ENCODE measurements at regions of chr11 and their contacts with region 1.

Region 1: GRCh38 chr11:250740-251299 is 14.0 kb downstream of the PSMD13 start:
- DNase-seq: peak; percentile 83
- ATAC-seq: peak; percentile 98
- H3K4me3 Mint-ChIP-seq: peak overlapping the region; percentile 63
- H3K27ac Mint-ChIP-seq: peak overlapping the region; percentile 82
- H3K4me1 Mint-ChIP-seq: peaks cover 14% of the 10 kb centered on the region
- H3K27me3 Mint-ChIP-seq: no peaks in the 10 kb centered on the region

Region 2: DNA sequence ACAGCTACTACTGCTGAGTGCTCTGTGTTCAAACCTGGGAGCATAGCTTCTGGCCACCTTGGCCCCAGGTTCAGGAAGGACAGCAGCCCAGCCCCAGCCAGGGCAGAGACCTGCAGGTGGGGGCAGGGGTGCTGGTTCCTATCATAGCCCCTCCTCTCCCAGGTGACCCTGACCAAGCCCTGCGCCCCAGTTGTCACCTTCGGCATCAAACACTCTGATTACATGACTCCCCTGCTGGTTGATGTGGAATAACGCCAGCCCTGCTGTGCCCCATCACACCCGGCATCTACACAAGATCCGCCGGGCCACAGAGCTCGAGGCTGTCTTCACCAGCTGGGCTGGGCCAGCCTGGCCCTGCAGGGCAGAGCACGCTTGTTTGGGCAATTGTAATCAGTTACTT is 51.0 kb before region 1 on chr11:
- POLR2A ChIA-PET with region 1: no interaction called
- DNase-seq: peak; percentile 25
- ATAC-seq: no peak
- H3K4me3 Mint-ChIP-seq: no peak overlapping the region
- H3K27ac Mint-ChIP-seq: no peak overlapping the region
- H3K4me1 Mint-ChIP-seq: peaks cover 22% of the 10 kb centered on the region
- H3K27me3 Mint-ChIP-seq: no peaks in the 10 kb centered on the region

Region 3: DNA sequence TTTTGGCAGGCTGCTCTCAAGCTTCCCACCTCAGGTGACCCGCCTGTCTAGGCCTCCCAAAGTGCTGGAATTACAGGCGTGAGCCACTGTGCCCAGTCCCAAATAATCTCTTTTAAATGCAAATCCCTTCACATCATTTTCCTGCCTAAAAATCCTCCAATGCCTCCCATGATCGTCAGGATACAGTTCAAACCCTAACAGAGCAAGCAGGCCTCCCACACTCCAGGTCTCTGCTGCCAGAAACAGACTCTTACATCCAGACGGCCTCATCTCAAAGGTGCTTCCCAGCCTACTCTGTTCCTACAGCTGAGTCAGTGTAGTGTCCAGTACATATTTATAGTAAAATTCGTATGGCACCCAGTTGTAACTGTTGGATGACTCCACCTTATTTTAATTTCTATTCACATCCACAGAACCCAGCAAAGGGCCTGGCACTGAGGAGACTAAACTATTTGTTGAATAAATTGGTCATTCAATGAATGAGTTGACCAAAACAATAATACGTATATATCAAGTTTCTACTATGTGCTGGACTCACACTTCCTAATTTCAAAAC is 22.9 kb before region 1 on chr11:
- POLR2A ChIA-PET with region 1: no interaction called
- DNase-seq: no peak
- ATAC-seq: no peak
- H3K4me3 Mint-ChIP-seq: no peak overlapping the region
- H3K27ac Mint-ChIP-seq: no peak overlapping the region
- H3K4me1 Mint-ChIP-seq: peaks cover 10% of the 10 kb centered on the region
- H3K27me3 Mint-ChIP-seq: no peaks in the 10 kb centered on the region

Region 4: DNA sequence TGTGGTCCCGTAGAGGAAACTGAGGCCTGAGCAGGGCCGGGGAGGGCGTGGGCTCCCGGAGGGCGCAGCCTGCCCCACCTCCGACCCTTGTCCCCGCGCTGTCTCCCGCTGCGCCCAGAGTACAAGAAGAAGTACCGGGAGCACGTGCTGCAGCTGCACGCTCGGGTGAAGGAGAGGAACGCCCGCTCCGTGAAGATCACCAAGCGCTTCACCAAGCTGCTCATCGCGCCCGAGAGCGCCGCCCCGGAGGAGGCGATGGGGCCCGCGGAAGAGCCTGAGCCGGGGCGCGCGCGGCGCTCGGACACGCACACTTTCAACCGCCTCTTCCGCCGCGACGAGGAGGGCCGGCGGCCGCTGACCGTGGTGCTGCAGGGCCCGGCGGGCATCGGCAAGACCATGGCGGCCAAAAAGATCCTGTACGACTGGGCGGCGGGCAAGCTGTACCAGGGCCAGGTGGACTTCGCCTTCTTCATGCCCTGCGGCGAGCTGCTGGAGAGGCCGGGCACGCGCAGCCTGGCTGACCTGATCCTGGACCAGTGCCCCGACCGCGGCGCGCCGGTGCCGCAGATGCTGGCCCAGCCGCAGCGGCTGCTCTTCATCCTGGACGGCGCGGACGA is 29.3 kb after region 1 on chr11:
- POLR2A ChIA-PET with region 1: interaction called, 20 read pairs
- DNase-seq: peak; percentile 69
- ATAC-seq: peak; percentile 31
- H3K4me3 Mint-ChIP-seq: peak overlapping the region; percentile 89
- H3K27ac Mint-ChIP-seq: peak overlapping the region; percentile 95
- H3K4me1 Mint-ChIP-seq: peaks cover 32% of the 10 kb centered on the region
- H3K27me3 Mint-ChIP-seq: no peaks in the 10 kb centered on the region

Region 5: GRCh38 chr11:288328-289144 is 37.7 kb after region 1 on chr11 and contains the start of gene PGGHG:
- POLR2A ChIA-PET with region 1: interaction called, 43 read pairs
- DNase-seq: peak; percentile 88
- ATAC-seq: peak; percentile 38
- H3K4me3 Mint-ChIP-seq: peak within 1 kb of the TSS; percentile 93
- H3K27ac Mint-ChIP-seq: peak within 1 kb of the TSS; percentile 98
- H3K4me1 Mint-ChIP-seq: peaks cover 34% of the 10 kb centered on the region
- H3K27me3 Mint-ChIP-seq: no peaks in the 10 kb centered on the region
- total RNA-seq, gene PGGHG: 641 to 664 TPM

Measured in activated naive CD8-positive, alpha-beta T cell treated with anti-CD3 and anti-CD28 coated beads, Interleukin-2, amount 10 ng/mL, durations not matched to agents 7 days and 5 days (primary cell).